CD8-positive, alpha-beta T cell (primary cell): ENCODE measurements at regions of chr3 and their contacts with region 1.

Region 1: DNA sequence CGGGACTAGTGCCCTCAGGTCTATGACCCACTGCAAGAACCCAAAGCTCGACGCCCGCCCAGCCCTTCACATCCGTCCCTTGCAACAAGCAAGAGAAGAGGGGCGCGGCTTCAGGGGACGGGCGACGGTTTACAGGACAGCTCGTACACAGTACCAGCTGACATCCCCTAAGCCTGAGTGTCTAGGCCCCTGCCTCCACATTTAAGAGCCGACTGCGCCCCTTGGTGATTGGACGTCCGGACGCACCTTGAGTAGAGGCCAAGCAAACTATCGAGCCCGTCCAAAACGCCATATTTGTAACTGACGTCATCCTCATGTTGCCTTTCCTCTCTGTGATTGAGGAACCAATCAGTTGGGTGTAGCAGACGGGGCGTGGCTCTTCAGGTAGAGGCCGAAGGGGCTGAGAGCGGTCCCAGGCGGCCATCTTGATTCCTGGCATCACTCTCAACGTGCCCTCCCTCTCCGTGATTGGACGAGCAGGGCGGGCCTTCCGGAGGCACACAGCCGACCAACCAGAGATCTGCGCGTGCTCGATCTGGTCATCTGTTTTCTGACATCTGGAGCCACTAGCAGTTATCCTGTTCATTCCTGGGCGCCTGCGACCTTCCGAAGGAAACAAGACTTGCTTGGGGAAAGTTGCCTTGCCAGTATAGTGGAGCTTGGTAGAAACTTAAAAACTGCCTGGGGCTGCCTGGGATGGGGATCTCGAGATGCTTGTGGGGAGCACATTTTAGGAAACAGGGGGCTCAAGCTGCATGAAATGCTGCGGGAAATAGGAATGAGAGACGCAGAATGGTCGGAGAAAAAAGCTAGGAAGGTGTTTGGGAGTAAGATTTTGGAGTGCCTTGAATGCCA is 4.0 kb upstream of the RPL14 start:
- DNase-seq: peak; percentile 89 to 99 (median 94)
- ATAC-seq: peak; percentile 89
- H3K4me3 ChIP-seq: peak overlapping the region; percentile 57 to 75
- H3K4me3 Mint-ChIP-seq: peak overlapping the region; percentile 92
- H3K27ac ChIP-seq: peak overlapping the region; percentile 85 to 95
- H3K27ac Mint-ChIP-seq: peak overlapping the region; percentile 99
- H3K4me1 ChIP-seq: peaks cover 22% of the 10 kb centered on the region
- H3K4me1 Mint-ChIP-seq: peaks cover 32% of the 10 kb centered on the region
- H3K27me3 ChIP-seq: no peaks in the 10 kb centered on the region
- H3K27me3 Mint-ChIP-seq: no peaks in the 10 kb centered on the region
- CTCF ChIP-seq: no peak

Region 2: GRCh38 chr3:39383045-39383880 is 1069.8 kb before region 1 on chr3 and contains the start of gene SLC25A38:
- CTCF ChIA-PET with region 1: no interaction called
- POLR2A ChIA-PET with region 1: no interaction called
- intact Hi-C with region 1: loop called (anchors 5 kb)
- DNase-seq: peak; percentile 58 to 93 (median 78)
- ATAC-seq: peak; percentile 79
- H3K4me3 ChIP-seq: peak within 1 kb of the TSS; percentile 81 to 98
- H3K4me3 Mint-ChIP-seq: peak within 1 kb of the TSS; percentile 99
- H3K27ac ChIP-seq: peak within 1 kb of the TSS; percentile 91 to 97
- H3K27ac Mint-ChIP-seq: peak within 1 kb of the TSS; percentile 98
- H3K4me1 ChIP-seq: peaks cover 43% of the 10 kb centered on the region
- H3K4me1 Mint-ChIP-seq: peaks cover 50% of the 10 kb centered on the region
- H3K27me3 ChIP-seq: no peaks in the 10 kb centered on the region
- H3K27me3 Mint-ChIP-seq: no peaks in the 10 kb centered on the region
- CTCF ChIP-seq: peak; percentile 39
- total RNA-seq, gene SLC25A38: 64.0 to 65.1 TPM

Region 3: DNA sequence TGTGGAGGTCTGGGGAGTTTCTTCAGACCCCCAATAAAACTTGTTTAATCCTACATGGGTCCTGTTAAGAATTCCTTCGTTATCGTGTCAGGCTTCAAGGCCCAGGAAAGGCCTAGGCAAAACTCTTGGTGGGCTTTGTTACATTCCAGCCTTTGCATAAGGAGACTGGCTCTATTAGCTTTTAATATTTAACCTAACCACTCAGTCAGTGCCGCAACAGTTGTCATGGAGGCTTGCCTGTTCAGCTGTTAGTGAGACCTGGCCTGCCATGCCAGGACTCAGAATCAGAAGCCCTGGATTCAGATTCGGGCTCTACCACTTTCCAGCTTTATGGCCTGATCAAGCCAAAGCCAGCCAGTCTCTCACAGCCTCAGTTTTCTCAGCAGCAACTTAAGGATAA is 124.0 kb before region 1 on chr3:
- CTCF ChIA-PET with region 1: no interaction called
- POLR2A ChIA-PET with region 1: no interaction called
- intact Hi-C with region 1: loop called in 1 of 2 experiments (anchors 5 kb)
- DNase-seq: no peak
- ATAC-seq: no peak
- H3K4me3 ChIP-seq: no peak overlapping the region
- H3K4me3 Mint-ChIP-seq: no peak overlapping the region
- H3K27ac ChIP-seq: no peak overlapping the region
- H3K27ac Mint-ChIP-seq: no peak overlapping the region
- H3K4me1 ChIP-seq: no peaks in the 10 kb centered on the region
- H3K4me1 Mint-ChIP-seq: peaks cover 3% of the 10 kb centered on the region
- H3K27me3 ChIP-seq: no peaks in the 10 kb centered on the region
- H3K27me3 Mint-ChIP-seq: peaks cover 3% of the 10 kb centered on the region
- CTCF ChIP-seq: no peak

Region 4: GRCh38 chr3:40490916-40491315 is 37.8 kb after region 1 on chr3:
- CTCF ChIA-PET with region 1: no interaction called
- POLR2A ChIA-PET with region 1: no interaction called
- intact Hi-C with region 1: no loop called
- DNase-seq: no peak
- ATAC-seq: no peak
- H3K4me3 ChIP-seq: no peak overlapping the region
- H3K4me3 Mint-ChIP-seq: no peak overlapping the region
- H3K27ac ChIP-seq: no peak overlapping the region
- H3K27ac Mint-ChIP-seq: no peak overlapping the region
- H3K4me1 ChIP-seq: no peaks in the 10 kb centered on the region
- H3K4me1 Mint-ChIP-seq: no peaks in the 10 kb centered on the region
- H3K27me3 ChIP-seq: no peaks in the 10 kb centered on the region
- H3K27me3 Mint-ChIP-seq: no peaks in the 10 kb centered on the region
- CTCF ChIP-seq: no peak

Region 5: DNA sequence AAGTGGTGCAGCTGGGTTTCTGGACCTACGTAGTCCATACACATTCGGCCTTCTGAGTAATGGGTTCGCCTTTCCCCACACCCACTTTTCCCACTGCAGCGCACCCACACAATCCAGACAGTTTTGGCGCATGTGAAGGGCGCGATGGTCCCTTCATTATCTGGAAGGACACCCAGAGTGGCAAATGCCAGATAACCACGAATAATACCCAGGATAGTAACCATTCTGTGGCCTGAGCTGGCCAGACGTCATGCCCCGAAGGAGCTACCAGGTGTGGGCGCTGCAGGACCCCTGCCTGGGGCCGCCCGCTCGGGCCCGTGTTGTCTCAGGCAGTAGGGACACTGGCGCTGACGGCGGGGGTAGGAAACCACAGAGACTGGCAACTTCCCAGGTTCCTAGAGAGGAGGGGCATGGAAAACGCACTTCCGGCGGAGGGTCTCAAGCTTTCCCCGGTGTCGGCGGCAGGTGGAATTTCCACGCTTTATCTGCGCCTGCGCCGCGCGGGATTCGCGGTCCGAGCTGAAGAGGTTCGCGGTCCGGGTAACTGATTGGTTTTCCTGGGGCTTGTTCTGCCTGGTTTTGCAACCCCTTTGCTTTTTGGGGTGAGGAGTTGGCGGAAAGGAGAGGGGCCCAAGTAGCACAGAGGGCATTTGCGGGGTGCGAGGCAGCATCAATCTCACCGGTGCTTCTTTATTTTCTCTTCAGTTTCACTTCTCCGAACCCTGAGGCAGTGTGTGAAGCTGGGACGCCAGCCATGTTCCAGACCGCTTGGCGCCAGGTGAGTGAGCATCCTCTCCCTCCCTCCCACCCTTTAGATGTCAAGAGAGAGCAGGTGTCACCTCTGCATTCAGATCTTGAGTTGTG is 52.7 kb after region 1 on chr3 and contains the start of gene ZNF620:
- CTCF ChIA-PET with region 1: interaction called, 3 read pairs
- POLR2A ChIA-PET with region 1: interaction called, 8 read pairs
- intact Hi-C with region 1: loop called in 1 of 2 experiments (anchors 1 kb)
- DNase-seq: peak; percentile 1 to 74 (median 48)
- ATAC-seq: peak; percentile 81
- H3K4me3 ChIP-seq: peak within 1 kb of the TSS; percentile 71 to 83
- H3K4me3 Mint-ChIP-seq: peak within 1 kb of the TSS; percentile 97
- H3K27ac ChIP-seq: peak within 1 kb of the TSS; percentile 32 to 46
- H3K27ac Mint-ChIP-seq: peak within 1 kb of the TSS; percentile 89
- H3K4me1 ChIP-seq: peaks cover 6% of the 10 kb centered on the region
- H3K4me1 Mint-ChIP-seq: peaks cover 15% of the 10 kb centered on the region
- H3K27me3 ChIP-seq: no peaks in the 10 kb centered on the region
- H3K27me3 Mint-ChIP-seq: no peaks in the 10 kb centered on the region
- CTCF ChIP-seq: peak; percentile 18
- total RNA-seq, gene ZNF620: 0.84 to 1.9 TPM

Region 6: GRCh38 chr3:41198950-41199865 is 746.1 kb after region 1 on chr3 and contains the start of gene CTNNB1:
- CTCF ChIA-PET with region 1: no interaction called
- POLR2A ChIA-PET with region 1: interaction called, 6 read pairs
- intact Hi-C with region 1: loop called (anchors 5 kb)
- DNase-seq: peak; percentile 87 to 96 (median 90)
- ATAC-seq: peak; percentile 81
- H3K4me3 ChIP-seq: peak within 1 kb of the TSS; percentile 95 to 98
- H3K4me3 Mint-ChIP-seq: peak within 1 kb of the TSS; percentile 96
- H3K27ac ChIP-seq: peak within 1 kb of the TSS; percentile 88 to 95
- H3K27ac Mint-ChIP-seq: peak within 1 kb of the TSS; percentile 97
- H3K4me1 ChIP-seq: peaks cover 40% of the 10 kb centered on the region
- H3K4me1 Mint-ChIP-seq: peaks cover 37% of the 10 kb centered on the region
- H3K27me3 ChIP-seq: no peaks in the 10 kb centered on the region
- H3K27me3 Mint-ChIP-seq: no peaks in the 10 kb centered on the region
- CTCF ChIP-seq: no peak
- total RNA-seq, gene CTNNB1: 206 to 225 TPM